Heart left ventricle (tissue), 16 donors: ENCODE measurements at regions of chr15 and their contacts with region 1.

Region 1: DNA sequence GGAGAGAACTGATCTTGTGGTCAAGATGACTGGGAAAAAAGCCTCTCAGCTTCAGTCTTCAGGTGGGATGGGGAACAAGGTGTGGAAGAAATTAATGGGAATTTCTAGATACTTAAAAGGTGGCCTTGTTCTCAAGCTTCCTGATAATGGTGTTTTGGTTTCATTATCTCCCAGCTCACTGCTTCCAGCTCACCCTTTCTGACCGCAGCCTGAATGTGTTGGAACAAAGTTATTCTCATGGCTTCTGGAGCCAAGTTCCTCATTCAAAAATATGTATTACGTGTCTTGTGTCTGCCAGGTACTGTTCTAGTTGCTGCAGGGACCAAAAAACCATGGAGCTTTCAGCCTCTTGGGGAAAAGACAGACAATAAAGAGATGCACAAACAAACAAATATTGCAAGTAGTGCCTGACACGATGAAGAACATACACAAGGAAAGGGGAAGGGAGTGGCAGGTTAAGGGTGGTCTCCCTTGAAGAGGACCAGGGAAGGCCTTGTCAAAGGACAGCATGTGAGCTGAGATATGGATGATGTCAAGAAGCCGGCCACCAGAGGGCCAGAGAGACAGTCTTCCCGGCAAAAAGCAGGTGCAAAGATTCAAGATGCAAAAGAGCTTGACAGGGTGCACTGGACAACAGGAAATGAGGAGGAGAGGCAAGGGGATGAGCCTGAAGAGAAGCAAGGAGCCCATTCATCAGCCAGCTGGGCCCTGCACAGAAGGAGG is 35.5 kb downstream of the ARRDC4 start:
- DNase-seq: no peak
- ATAC-seq: no peak
- H3K4me3 ChIP-seq: no peak overlapping the region
- H3K27ac ChIP-seq: peak overlapping the region in 1 of 12 donors; percentile 61
- H3K4me1 ChIP-seq: peaks cover 0 to 25% (median 7%) of the 10 kb centered on the region in 12 donors
- H3K27me3 ChIP-seq: no peaks in the 10 kb centered on the region
- CTCF ChIP-seq: peak in 8 of 12 donors; percentile 8 to 32 (median 14)
- POLR2A ChIP-seq: no peak

Region 2: DNA sequence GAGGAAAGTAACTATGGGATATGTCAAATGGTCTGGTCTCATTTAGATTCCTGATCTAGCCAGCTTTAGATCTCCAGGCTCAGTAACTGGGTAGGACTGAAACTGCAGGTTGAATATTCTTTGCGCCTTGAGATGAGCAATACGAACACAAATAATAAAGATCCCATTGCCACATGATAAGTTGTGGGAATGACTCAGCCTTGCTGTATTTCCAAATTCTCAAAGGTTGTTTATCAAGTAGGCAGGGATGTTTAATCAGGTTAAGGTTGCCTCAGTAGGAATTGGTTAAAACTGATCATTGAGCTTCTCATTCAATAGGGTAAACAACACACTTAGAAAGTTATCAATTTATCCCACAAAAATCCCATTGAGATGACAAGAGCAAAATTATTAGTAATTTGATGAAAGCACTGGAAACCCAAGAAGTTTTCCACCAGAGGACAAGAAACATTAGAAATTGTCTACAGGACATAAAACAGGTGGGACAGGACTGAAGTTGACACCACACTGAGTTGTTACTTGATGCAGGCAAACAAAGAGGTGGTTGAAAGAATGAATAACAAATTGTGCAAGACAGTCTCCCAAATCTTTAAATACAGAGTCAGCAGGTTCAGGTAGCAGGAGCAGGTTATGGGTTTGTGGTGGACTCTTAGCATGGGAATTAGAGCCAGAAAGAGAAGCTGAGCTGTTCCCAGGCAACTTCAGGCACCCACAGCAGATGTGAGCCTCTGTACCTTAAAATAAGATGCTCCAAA is 66.0 kb before region 1 on chr15:
- intact Hi-C with region 1: loop called in 1 of 10 experiments (anchors 10 kb)
- DNase-seq: no peak
- ATAC-seq: no peak
- H3K4me3 ChIP-seq: no peak overlapping the region
- H3K27ac ChIP-seq: no peak overlapping the region
- H3K4me1 ChIP-seq: peaks cover 0 to 3% (median 0%) of the 10 kb centered on the region in 12 donors
- H3K27me3 ChIP-seq: no peaks in the 10 kb centered on the region
- CTCF ChIP-seq: no peak
- POLR2A ChIP-seq: no peak